Cardiac septum (tissue), 1 donor: ENCODE measurements at regions of chr6 and their contacts with region 1.

Region 1: DNA sequence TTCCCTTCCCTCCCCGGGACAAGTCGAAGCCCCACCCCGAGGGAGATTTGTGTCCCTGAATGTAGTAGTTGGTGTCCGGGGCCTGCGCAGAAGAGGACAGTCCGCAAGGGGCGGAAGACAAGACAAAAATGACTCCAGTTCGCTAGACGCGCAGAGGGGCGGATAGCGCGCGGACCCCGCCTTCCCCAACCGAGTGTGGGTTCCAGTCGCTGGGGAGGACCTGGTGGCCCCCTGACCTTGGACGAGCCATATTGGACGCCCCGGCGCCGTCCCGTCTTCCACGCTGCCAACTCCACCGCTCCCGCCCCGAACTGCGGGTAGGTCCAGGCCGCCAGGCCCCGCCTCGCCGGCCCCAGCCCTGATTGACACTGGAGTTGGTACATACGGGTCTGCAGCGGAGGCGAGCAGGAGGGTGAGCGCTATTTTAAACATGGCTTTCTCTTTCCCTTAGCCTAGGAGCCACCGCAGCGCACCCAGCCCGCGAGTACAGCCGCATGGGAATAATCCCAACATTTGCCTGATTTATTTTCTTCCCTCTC is 802 bp downstream of the HMGN3 start:
- DNase-seq: peak; percentile 94

Region 2: DNA sequence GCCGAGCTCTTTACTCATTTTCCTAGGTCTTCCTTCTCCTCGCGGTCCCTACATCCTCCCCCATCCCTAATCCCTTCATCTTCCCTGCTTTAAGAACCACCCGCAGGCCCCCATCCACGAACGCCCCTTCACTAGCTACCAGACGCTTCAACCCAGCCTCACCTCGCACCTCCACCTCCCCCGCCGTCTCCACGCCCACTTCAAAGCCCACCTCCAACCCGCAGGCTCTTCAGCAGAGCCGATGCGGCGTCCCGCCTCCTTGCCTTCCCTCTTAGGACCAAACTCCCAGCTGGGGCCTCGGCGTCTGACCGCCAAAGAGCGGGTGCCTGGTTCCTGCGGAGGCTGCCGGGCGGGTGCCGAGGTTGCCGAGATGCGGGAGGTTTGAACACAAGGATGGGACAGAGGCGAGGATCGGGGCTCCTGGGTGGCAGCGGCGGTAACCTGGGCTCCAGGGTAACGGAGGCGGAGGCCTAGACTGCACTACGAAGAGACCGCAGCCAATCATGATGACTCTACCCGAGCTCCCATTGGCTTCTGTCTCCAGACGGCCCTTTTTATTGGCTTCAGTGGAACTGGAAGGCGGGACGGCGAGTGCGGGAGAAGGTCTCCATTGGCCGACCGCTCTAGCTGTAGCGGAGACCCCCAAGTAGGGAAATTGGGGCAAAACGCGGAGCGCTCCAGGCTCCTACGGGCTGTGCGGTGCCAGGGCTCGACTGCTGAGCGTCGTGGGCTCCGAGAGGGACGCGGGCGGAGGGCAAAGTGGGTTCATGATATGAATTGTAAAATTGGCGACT is 303.5 kb after region 1 on chr6 and contains the start of gene LCA5:
- intact Hi-C with region 1: loop called (anchors 5 kb)
- DNase-seq: peak; percentile 96
- total RNA-seq, gene LCA5: 2.6 TPM